Panc1 (cell line): ENCODE measurements at regions of chr5 and their contacts with region 1.

Region 1: DNA sequence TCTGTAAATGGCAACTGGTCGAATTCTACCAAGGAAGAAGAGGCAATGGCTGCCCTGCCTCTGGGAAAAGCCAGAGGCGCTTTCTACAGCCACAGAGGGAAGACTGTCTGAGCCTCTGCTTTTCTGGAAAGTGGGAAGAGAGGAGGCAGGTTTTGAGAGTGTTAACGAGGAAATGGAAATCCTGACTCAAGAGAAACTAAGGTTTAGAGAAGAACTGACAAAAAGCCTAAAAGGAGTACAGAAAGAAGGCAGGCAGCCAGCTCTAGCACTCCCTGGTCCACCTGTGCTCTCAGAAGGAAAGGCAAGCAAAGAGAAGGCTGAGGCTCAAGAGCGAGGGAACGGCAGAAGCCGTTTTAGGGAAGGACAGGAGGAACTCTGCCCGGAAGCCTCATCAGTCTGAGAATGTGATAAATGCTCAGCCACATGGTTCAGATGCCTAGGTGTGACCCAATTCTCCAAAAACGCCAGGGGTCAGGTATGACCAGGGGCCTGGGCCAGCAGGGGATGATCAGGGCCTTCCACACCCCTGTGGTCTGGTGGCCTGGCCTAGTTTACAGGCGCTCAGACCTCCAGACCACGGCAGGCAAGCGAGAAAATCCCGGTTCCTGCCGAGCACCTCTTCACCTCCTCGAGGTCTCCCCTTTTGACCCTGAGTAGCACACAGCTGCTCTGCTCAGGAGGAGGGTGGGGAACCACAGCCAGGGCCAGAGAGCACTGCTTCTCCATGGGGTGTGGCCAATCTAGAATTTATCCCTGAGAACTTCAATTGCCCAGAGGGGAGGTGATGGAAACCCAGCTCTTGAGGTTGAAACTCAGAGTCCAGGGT is 80.0 kb upstream of the FBXW11 start:
- DNase-seq: no peak
- ATAC-seq: peak; percentile 43
- H3K4me3 ChIP-seq: no peak overlapping the region
- H3K27ac ChIP-seq: no peak overlapping the region
- H3K4me1 ChIP-seq: no peaks in the 10 kb centered on the region
- H3K27me3 ChIP-seq: no peaks in the 10 kb centered on the region
- CTCF ChIP-seq: no peak

Region 2: DNA sequence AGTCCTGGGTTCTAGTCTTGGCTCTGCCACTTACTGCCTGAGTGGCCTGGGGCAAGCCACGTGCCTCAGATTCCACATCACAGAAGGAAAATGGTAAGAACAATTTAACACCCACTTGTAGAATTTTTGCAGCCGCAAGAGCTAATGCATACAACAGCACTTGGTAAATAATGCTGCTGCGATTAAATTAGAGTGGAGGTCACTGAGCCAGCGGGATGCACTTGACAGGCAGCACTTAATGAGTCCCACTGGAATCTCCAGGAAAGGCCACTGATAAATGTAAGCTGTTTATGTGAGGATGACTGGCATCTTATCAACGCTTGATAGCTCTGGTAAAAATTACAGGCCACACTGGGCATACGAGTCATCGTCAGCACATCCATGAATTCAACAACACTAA is 256.5 kb after region 1 on chr5:
- CTCF ChIA-PET with region 1: no interaction called
- POLR2A ChIA-PET with region 1: interaction called, 12 read pairs
- in situ Hi-C with region 1: no loop called
- intact Hi-C with region 1: no loop called
- DNase-seq: no peak
- ATAC-seq: no peak
- H3K4me3 ChIP-seq: no peak overlapping the region
- H3K27ac ChIP-seq: no peak overlapping the region
- H3K4me1 ChIP-seq: no peaks in the 10 kb centered on the region
- H3K27me3 ChIP-seq: no peaks in the 10 kb centered on the region
- CTCF ChIP-seq: no peak